ENCODE measurements at regions of chr11 and their contacts with region 1.

Region 1: DNA sequence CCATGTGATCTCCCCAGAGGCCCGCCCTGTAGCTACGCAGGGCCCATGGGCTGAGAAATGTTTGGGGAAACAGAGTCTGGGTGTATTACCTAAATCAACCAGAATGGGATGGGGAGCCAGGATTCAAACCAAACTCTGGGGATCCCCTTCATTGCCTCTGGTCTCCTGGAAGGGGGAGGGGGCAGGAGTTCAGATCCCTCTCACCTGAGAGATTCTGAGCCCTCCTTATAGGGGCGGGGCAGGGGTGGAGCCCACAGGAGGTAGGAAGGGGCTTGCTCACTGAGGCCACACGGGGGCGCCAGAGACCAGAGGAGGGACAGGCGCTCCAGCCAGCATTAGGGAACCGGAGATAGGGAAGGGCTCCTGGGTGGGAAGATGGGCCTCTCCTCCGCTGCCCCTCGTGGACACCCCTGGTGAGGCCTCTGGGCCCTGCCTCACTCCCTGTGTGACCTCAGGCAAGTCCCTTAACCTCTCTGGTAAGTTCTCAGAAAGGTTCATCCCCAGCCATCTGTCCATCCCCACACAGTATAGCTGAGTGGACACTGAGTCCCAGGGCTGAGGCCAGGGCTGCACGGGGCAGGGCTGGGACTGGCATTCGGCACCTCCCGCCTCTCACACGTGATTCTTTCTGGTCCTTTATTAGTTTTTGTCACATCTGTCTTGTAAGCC is 2.7 kb upstream of the CDC42BPG start:
- DNase-seq: peak; percentile 90
- ATAC-seq: peak; percentile 21
- H3K4me3 Mint-ChIP-seq: no peak overlapping the region
- H3K27ac Mint-ChIP-seq: peak overlapping the region; percentile 61
- H3K4me1 Mint-ChIP-seq: peaks cover 64% of the 10 kb centered on the region
- H3K27me3 Mint-ChIP-seq: no peaks in the 10 kb centered on the region
- CTCF ChIP-seq: peak; percentile 46

Region 2: DNA sequence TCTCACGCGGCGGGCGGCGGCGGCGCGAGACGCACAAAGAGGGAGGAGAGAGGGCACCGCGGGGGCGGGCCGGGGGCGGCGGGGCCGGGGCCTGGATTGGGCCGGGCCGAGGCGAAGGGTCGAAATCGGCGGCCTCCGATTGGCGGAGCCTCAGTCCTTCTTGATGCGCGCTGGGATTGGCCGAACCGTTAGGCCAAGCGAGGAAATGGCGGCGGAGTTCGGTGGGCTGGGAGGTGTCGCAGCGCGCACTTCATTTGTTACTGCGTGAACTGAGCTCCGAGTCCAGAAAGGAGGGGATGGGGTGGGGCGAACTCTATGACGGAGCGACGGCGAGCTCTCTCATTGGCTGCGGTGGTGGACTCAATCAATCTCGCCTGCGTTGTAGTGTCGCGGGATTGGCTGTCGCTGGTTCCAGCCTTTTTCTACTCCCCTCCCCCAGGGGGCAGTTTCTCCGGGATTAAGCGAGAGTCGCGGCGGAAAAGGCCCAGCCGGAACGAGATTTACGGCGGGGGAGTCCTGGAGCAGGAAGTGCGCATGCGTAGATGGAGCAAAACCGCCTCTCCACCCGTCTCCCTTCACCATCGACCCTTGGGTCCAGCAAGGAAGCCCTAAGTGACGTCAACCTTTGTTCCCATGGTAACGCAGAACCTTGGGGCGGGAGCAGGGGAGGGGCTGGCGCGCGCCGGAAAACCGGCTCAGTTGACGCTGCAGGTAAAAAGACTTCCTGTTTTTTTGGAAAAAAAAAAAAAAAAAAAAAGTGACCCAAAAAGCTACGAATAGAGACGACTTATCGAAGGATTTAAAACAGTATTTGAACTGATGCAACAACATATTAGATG is 68.4 kb before region 1 on chr11 and contains the start of gene SF1:
- CTCF ChIA-PET with region 1: interaction called, 8 read pairs
- POLR2A ChIA-PET with region 1: interaction called, 20 read pairs
- intact Hi-C with region 1: loop called (anchors 2 kb)
- DNase-seq: peak; percentile 91
- ATAC-seq: peak; percentile 81
- H3K4me3 Mint-ChIP-seq: peak within 1 kb of the TSS; percentile 90
- H3K27ac Mint-ChIP-seq: peak within 1 kb of the TSS; percentile 99
- H3K4me1 Mint-ChIP-seq: peaks cover 75% of the 10 kb centered on the region
- H3K27me3 Mint-ChIP-seq: no peaks in the 10 kb centered on the region
- CTCF ChIP-seq: no peak
- total RNA-seq, gene SF1: 640 and 687 TPM in 2 replicates

Region 3: GRCh38 chr11:64810271-64810890 is 36.8 kb before region 1 on chr11 and contains the start of gene MEN1:
- CTCF ChIA-PET with region 1: interaction called, 5 read pairs
- POLR2A ChIA-PET with region 1: interaction called, 15 read pairs
- intact Hi-C with region 1: loop called (anchors 2 kb)
- DNase-seq: peak; percentile 78
- ATAC-seq: peak; percentile 87
- H3K4me3 Mint-ChIP-seq: peak within 1 kb of the TSS; percentile 96
- H3K27ac Mint-ChIP-seq: peak within 1 kb of the TSS; percentile 85
- H3K4me1 Mint-ChIP-seq: peaks cover 36% of the 10 kb centered on the region
- H3K27me3 Mint-ChIP-seq: no peaks in the 10 kb centered on the region
- CTCF ChIP-seq: no peak
- total RNA-seq, gene MEN1: 35.1 and 44.6 TPM in 2 replicates

Region 4: GRCh38 chr11:64887757-64888405 is 40.7 kb after region 1 on chr11:
- CTCF ChIA-PET with region 1: interaction called, 310 read pairs
- POLR2A ChIA-PET with region 1: interaction called, 1,194 read pairs
- intact Hi-C with region 1: loop called (anchors 1 kb)
- DNase-seq: peak; percentile 89
- ATAC-seq: peak; percentile 95
- H3K4me3 Mint-ChIP-seq: peak overlapping the region; percentile 80
- H3K27ac Mint-ChIP-seq: peak overlapping the region; percentile 88
- H3K4me1 Mint-ChIP-seq: peaks cover 37% of the 10 kb centered on the region
- H3K27me3 Mint-ChIP-seq: no peaks in the 10 kb centered on the region
- CTCF ChIP-seq: peak; percentile 66

Region 5: DNA sequence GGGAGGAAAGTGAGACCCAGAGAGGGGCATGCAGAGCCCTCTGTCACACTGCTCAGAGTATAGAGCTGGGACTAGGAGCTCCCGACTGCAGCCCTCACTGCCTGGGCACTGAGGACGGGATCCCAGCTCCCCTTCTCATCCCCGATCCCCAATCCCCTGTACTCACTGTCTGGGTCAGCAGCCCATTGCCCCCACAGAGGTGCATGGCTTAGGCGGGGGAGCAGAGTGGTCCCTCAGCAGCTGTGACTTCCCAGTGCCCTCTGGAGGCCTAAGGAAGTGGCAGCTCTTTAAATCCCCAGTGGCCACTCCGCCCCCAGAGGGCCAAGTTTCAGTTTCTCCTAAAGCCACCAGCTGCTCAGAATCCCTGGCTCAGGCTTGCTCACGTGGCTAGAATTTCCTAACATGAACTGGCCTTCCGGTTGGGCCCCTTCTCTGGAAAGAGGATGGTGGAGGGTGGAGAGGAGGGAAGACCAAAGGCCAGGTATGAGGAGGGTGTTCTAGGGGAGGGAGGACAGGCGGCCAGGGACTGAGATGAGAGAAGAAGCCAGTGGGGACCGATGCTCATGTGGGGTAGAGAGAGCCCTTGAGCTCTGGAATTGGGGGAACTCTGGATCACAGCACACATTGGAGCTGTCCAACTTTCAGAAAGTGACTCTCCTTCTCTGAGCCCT is 149.7 kb after region 1 on chr11 and contains the start of gene BATF2:
- CTCF ChIA-PET with region 1: interaction called, 12 read pairs
- POLR2A ChIA-PET with region 1: interaction called, 3 read pairs
- intact Hi-C with region 1: loop called (anchors 1 kb)
- DNase-seq: peak; percentile 33
- ATAC-seq: peak; percentile 88
- H3K4me3 Mint-ChIP-seq: peak within 1 kb of the TSS; percentile 70
- H3K27ac Mint-ChIP-seq: peak within 1 kb of the TSS; percentile 66
- H3K4me1 Mint-ChIP-seq: peaks cover 20% of the 10 kb centered on the region
- H3K27me3 Mint-ChIP-seq: no peaks in the 10 kb centered on the region
- CTCF ChIP-seq: no peak
- total RNA-seq, gene BATF2: 0.07 and 0.24 TPM in 2 replicates

Region 6: DNA sequence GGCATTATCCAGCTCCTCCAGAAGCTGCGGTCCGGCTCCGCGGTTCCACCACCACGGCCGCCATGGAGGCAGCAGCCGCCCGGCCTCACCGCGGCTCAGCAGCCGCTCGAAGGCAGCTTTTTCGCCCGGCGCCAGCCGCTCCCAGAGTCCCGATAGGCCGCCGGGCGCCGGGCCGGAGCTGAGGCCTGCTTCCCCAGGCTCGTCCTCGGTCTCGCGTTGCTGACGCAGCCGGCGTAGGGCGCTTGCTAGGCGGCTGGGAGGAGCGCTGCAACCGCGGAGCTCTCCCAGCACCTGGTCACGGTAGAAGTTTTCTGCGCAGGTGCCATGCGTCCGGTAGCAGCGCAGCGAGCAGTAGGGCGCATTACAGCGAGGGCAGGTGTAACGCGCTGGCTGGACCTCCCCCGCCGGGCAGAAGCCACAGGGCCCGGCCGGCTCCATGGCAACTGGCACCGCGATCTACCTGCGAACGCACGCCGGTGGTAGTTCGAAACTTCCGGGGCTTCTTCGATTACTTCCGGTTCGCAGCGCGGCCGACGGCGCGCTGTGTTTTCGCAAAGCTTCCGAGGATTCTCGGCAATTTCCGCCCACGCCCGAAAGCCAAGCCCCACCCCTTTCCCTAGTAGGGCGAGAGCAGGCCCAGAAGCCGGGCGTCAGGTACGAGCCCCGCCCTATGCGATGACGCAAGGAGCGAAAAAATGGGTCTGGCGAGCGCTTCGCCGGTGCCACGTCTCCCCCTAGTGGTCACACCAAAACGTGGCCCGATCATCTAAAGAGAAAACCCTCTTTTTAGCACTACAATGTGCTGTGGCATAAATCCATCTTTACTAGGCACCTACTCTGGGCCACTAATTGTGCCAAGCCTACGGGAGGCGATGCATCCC is 270.3 kb after region 1 on chr11 and contains the start of gene ZNHIT2:
- CTCF ChIA-PET with region 1: interaction called, 4 read pairs
- POLR2A ChIA-PET with region 1: interaction called, 10 read pairs
- intact Hi-C with region 1: loop called (anchors 1 kb)
- DNase-seq: peak; percentile 98
- ATAC-seq: peak; percentile 70
- H3K4me3 Mint-ChIP-seq: peak within 1 kb of the TSS; percentile 87
- H3K27ac Mint-ChIP-seq: peak within 1 kb of the TSS; percentile 89
- H3K4me1 Mint-ChIP-seq: peaks cover 76% of the 10 kb centered on the region
- H3K27me3 Mint-ChIP-seq: no peaks in the 10 kb centered on the region
- CTCF ChIP-seq: peak; percentile 34
- total RNA-seq, gene ZNHIT2: 11.3 and 13.4 TPM in 2 replicates